ENCODE measurements at regions of chr4 and their contacts with region 1.

Region 1: GRCh38 chr4:69689599-69689998 is 36.6 kb upstream of the UGT2A1 start:
- DNase-seq: no peak

Region 2: GRCh38 chr4:70364002-70364401 is 674.4 kb after region 1 on chr4:
- intact Hi-C with region 1: loop called in 1 of 2 experiments (anchors 5 kb)
- DNase-seq: no peak

Measured in posterior vena cava (tissue), 2 donors.